Activated CD4-positive, alpha-beta T cell treated with anti-CD3 and anti-CD28 coated beads for 36 hours (primary cell): ENCODE measurements at regions of chr2 and their contacts with region 1.

Region 1: DNA sequence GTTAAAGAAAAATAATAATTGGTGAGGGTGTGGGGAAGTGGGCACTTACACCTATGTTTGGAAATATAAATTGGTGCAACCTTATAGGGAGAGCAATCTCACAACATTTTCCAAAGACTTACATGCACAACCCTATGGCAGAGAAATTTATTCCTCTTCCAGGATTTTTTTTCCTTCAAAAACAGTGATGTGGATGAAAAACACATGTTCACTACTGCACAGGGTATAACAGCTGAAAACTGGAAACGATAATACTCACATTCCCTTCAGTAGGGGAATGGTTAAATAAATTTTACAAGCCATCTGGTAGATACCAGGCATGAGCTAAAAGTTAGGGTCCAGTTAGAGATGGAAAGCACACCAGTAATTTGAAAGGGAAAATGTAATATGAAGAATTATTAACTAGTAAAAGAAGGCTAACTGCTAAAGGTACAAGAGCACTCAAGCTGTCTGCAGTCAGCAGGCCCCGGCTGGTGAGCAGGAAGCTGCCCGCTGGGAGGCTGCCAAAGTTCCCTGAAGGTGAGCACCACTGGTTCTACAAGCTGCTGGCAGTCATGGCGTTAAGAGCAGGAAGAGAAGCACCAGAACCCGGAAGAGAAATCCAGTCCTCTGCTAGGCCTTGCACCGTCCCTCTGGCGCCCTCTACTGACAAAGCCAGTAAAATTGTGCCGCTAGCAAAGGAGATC is 28.4 kb upstream of the CASP8 start:
- DNase-seq: peak; percentile 96
- ATAC-seq: peak; percentile 47
- H3K4me3 Mint-ChIP-seq: peak overlapping the region; percentile 68
- H3K27ac Mint-ChIP-seq: peak overlapping the region; percentile 78
- H3K4me1 Mint-ChIP-seq: peaks cover 49% of the 10 kb centered on the region
- H3K27me3 Mint-ChIP-seq: no peaks in the 10 kb centered on the region

Region 2: DNA sequence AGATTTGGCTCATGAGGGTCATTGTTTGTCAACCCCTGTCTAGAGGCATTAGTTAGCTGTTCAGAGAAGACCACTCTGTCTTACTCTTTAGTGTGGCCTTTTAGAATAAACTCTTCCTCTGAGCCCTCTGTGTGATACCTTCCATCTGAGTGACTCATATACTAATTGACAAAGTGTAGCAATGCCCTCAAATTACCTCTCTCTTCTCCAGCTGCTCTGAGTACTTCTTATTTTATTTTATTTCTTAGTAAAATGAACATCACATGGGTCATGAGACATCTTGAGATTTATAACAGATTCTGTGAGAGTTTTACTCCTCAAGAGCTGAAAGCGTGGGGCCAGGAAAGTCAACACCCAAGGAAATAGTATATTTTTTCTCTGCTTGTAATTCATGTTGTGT is 789.5 kb before region 1 on chr2:
- CTCF ChIA-PET with region 1: no interaction called
- POLR2A ChIA-PET with region 1: no interaction called
- intact Hi-C with region 1: no loop called
- DNase-seq: no peak
- ATAC-seq: peak; percentile 66
- H3K4me3 Mint-ChIP-seq: no peak overlapping the region
- H3K27ac Mint-ChIP-seq: no peak overlapping the region
- H3K4me1 Mint-ChIP-seq: peaks cover 13% of the 10 kb centered on the region
- H3K27me3 Mint-ChIP-seq: no peaks in the 10 kb centered on the region

Region 3: DNA sequence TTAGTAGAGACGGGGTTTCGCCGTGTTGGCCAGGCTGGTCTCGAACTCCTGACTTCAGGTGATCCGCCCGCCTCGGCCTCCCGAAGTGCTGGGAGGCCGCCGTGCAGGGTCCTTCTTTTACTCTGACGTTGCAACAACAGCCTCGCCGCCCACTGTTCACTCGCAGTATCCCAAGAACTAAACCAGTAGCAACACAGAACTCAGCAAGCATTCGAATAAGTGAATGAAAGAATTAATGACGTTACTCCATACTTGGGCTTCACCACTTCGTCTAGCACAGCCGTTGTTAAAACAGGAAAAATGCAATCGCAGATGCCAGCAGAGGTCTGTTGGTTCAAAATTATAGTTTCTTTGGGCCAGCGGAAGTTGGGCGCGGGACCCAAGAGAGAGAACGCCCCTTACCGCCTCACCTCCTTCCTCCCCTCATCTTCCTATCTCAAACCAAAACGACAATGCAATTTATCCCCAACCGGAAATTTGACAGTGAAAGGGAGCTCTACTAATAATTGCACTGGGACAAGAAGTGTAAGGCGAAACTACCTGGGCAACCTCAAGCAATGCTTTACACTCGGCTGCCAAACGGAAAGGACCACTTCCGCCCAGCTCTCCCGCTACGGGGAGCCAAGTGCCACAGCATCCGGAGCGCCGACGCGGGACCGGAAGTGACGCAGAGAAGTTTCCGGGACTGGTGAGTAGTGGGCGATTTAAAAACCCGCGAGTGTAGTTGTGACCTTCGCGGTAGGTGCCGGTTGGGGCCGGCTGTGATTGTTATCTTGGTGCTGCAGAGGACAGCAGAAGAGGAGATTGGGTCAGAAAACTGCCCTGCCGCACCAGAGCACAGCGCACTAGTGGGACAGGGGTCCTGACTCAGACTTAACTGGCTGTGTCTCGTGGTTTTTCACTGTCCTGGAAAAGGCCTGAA is 343.0 kb before region 1 on chr2 and contains the starts of genes NIF3L1 and PPIL3:
- CTCF ChIA-PET with region 1: interaction called, 12 read pairs
- POLR2A ChIA-PET with region 1: interaction called, 4 read pairs
- intact Hi-C with region 1: loop called in 1 of 2 experiments (anchors 1 kb)
- DNase-seq: peak; percentile 99
- ATAC-seq: peak; percentile 83
- H3K4me3 Mint-ChIP-seq: peak within 1 kb of the TSS; percentile 98
- H3K27ac Mint-ChIP-seq: peak within 1 kb of the TSS; percentile 100
- H3K4me1 Mint-ChIP-seq: peaks cover 46% of the 10 kb centered on the region
- H3K27me3 Mint-ChIP-seq: no peaks in the 10 kb centered on the region
- total RNA-seq, gene NIF3L1: 37.0 to 47.7 TPM
- total RNA-seq, gene PPIL3: 52.6 to 53.0 TPM

Region 4: GRCh38 chr2:201071479-201072200 is 160.3 kb before region 1 on chr2 and contains the starts of genes HYCC2 and NDUFB3:
- CTCF ChIA-PET with region 1: interaction called, 18 read pairs
- POLR2A ChIA-PET with region 1: interaction called, 4 read pairs
- intact Hi-C with region 1: loop called (anchors 1 to 2 kb)
- DNase-seq: peak; percentile 95
- ATAC-seq: peak; percentile 94
- H3K4me3 Mint-ChIP-seq: peak within 1 kb of the TSS; percentile 97
- H3K27ac Mint-ChIP-seq: peak within 1 kb of the TSS; percentile 96
- H3K4me1 Mint-ChIP-seq: peaks cover 58% of the 10 kb centered on the region
- H3K27me3 Mint-ChIP-seq: no peaks in the 10 kb centered on the region
- total RNA-seq, gene HYCC2: 15.8 to 16.0 TPM
- total RNA-seq, gene NDUFB3: 126 to 150 TPM

Region 5: GRCh38 chr2:201194097-201194496 is 37.8 kb before region 1 on chr2:
- CTCF ChIA-PET with region 1: interaction called, 36 read pairs
- POLR2A ChIA-PET with region 1: interaction called, 4 read pairs
- intact Hi-C with region 1: loop called in 1 of 2 experiments (anchors 2 kb)
- DNase-seq: no peak
- ATAC-seq: peak; percentile 91
- H3K4me3 Mint-ChIP-seq: peak overlapping the region; percentile 5
- H3K27ac Mint-ChIP-seq: no peak overlapping the region
- H3K4me1 Mint-ChIP-seq: peaks cover 65% of the 10 kb centered on the region
- H3K27me3 Mint-ChIP-seq: no peaks in the 10 kb centered on the region

Region 6: GRCh38 chr2:201242571-201243277 is 10.8 kb after region 1 on chr2:
- CTCF ChIA-PET with region 1: interaction called, 11 read pairs
- POLR2A ChIA-PET with region 1: no interaction called
- intact Hi-C with region 1: no loop called
- DNase-seq: no peak
- ATAC-seq: peak; percentile 47
- H3K4me3 Mint-ChIP-seq: no peak overlapping the region
- H3K27ac Mint-ChIP-seq: no peak overlapping the region
- H3K4me1 Mint-ChIP-seq: peaks cover 34% of the 10 kb centered on the region
- H3K27me3 Mint-ChIP-seq: no peaks in the 10 kb centered on the region

Region 7: GRCh38 chr2:201363857-201364560 is 132.1 kb after region 1 on chr2:
- CTCF ChIA-PET with region 1: interaction called, 48 read pairs
- POLR2A ChIA-PET with region 1: interaction called, 3 read pairs
- intact Hi-C with region 1: loop called (anchors 1 kb)
- DNase-seq: peak; percentile 27
- ATAC-seq: peak; percentile 91
- H3K4me3 Mint-ChIP-seq: no peak overlapping the region
- H3K27ac Mint-ChIP-seq: peak overlapping the region; percentile 44
- H3K4me1 Mint-ChIP-seq: peaks cover 34% of the 10 kb centered on the region
- H3K27me3 Mint-ChIP-seq: no peaks in the 10 kb centered on the region

Region 8: GRCh38 chr2:201780674-201781581 is 549.0 kb after region 1 on chr2 and contains the start of gene ALS2:
- CTCF ChIA-PET with region 1: no interaction called
- POLR2A ChIA-PET with region 1: no interaction called
- intact Hi-C with region 1: loop called in 1 of 2 experiments (anchors 2 kb)
- DNase-seq: peak; percentile 96
- ATAC-seq: peak; percentile 95
- H3K4me3 Mint-ChIP-seq: peak within 1 kb of the TSS; percentile 84
- H3K27ac Mint-ChIP-seq: peak within 1 kb of the TSS; percentile 92
- H3K4me1 Mint-ChIP-seq: peaks cover 25% of the 10 kb centered on the region
- H3K27me3 Mint-ChIP-seq: peaks cover 7% of the 10 kb centered on the region
- total RNA-seq, gene ALS2: 12.3 to 12.4 TPM